ENCODE measurements at regions of chr10 and their contacts with region 1.

Region 1: DNA sequence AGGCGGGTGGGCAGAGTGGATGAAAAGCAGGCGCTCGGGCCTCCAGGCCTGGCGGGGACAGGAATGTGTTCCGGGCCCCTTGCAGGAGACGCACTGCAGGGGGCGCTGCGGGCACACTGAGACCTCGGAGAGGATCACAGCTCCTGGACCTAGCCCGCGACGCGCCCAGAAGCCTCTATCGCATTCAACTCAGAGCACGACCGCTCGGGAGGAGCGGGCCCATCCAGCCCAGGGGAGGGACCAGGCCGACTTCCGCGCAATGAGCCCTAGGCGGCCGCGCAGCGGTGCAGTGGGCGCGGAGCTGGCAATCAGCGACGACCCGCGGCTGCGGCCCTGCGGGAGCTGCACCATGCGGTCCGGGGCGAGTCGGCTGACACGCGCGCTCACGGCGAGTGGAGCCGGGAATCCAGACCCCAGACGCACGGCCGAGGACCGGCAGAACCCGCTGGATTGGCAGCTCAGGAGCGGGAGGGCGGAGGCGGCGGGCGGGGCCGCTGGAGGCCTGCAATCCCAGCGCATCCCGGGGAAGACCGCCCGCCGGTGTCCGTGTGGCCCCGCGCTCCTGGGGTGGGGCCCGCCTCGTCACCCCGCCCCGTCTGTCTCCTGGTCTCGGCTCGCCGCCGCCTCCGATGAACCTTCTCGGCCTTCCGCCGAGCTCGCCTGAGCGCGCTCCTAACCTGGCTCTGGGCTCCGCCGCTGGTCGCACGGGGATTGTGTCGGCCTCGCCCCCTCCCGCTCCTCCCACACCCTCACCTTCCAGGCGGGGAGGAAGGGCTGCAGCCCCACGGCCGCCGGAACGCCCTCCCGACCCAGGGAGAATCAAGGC is 33.5 kb upstream of the GRID1 start:
- DNase-seq: peak; percentile 93 to 96
- H3K4me3 ChIP-seq: peak overlapping the region; percentile 64 to 68
- H3K27ac ChIP-seq: peak overlapping the region; percentile 73 to 85
- H3K4me1 ChIP-seq: peaks cover 0 to 37% (median 30%) of the 10 kb centered on the region in 4 donors
- H3K27me3 ChIP-seq: no peaks in the 10 kb centered on the region
- CTCF ChIP-seq: peak; percentile 93 to 96

Region 2: DNA sequence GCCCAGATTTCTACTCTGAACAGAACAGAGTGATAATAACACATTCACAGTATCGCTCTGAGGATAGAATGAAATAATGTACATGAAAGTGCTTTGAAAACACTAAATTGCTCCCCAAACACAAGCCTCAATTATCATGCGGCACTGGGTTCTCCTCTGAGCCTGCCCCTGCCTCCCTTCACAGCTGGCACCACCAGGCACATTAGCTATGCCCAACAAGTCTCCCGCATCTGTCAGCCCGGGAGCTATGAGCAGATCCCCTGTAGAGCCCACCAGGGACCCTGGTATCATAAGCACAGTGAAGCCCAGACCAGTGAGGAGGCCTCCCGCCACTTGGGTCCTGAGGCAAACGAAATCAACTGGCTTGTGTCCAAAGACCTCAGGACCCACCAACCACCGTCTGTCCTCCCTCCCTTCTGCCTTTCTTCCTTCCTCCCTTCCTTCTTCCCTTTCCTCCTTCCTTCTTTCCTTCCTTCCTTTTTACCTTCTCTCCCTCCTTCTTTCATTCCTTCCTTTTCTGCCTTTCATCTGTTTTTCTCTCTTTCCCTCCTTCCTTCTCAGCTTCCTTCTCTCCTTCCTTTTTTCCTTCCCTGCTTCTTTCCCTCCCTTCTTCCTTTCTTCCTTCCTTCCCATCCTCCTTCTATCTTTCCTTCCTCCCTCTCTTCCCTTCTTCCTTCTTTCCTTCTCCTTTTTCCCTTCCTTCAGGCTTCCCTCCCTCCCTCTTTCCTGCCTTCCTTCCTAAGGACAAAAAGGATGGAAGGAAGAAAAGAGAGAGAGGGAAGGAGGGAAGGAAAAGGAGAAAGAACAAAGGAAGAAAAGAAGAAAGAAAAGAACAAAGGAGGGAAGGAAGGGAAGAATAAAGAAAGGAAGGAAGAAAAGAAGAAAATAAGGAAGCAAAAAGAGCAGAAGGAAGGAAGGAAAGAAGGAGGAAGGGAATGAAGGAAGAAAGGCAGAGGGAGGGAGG is 438.7 kb before region 1 on chr10:
- intact Hi-C with region 1: no loop called
- DNase-seq: no peak
- H3K4me3 ChIP-seq: no peak overlapping the region
- H3K27ac ChIP-seq: no peak overlapping the region
- H3K4me1 ChIP-seq: no peaks in the 10 kb centered on the region
- H3K27me3 ChIP-seq: no peaks in the 10 kb centered on the region
- CTCF ChIP-seq: no peak

Region 3: DNA sequence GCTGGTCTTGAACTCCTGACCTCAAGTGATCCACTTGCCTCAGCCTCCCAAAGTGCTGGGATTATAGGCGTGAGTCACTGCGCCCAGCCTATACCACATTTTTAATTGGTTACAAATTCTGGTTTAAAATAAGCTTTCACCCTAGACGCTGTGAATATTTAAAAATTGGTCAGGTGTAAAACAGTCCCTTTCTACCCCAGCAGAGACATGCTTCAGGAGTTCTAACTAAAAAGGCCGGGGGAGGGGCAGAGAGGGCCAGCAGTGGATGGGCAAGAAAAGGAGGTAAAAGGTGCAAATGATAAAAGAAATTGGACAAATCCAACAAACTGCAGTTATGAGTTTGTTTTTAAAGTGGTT is 51.5 kb after region 1 on chr10:
- intact Hi-C with region 1: no loop called
- DNase-seq: no peak
- H3K4me3 ChIP-seq: no peak overlapping the region
- H3K27ac ChIP-seq: no peak overlapping the region
- H3K4me1 ChIP-seq: peaks cover 0 to 7% (median under 1%) of the 10 kb centered on the region in 4 donors
- H3K27me3 ChIP-seq: no peaks in the 10 kb centered on the region
- CTCF ChIP-seq: no peak

Region 4: DNA sequence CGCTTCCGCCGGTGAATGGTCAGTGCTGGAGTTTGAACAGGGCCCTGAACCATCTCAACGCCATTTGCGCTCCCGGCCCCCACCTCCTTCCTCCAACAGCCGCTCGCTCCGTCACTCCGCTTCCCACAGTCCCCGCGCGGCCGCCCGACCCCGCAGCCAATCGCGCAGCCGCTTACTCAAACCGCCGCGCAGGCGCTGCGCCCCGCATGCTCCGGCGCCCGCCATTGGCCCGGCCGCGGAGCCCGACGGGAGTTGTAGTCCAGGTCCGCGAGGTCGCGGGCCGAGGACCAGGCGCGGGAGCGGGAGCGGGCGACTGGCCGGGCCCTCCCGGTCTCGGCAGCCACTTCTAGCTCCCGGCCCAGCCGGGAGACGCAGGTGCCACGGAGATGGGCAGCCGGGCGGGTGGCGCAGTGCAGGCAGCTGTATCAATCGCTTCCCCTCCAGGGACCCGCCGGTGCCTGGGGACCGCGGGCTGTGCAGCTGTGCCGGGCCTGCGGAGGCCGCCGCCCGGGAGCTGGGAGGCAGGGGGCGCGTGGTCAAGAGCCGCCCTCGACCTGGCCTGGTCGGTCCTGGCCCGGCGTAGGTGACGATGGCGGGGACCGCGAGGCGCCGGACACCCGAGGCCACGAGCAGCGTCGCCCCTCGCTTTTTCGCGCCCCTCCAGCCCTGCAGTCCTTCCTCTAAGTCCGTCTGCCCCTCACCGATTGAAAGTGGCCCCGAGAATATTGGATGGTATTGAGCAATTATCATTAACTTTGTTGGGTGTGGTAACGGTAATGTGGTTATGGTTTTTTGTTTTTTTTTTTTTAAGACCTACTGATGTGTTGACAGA is 121.8 kb after region 1 on chr10 and contains the start of gene WAPL:
- intact Hi-C with region 1: loop called (anchors 2 kb)
- DNase-seq: peak; percentile 96 to 98
- H3K4me3 ChIP-seq: peak within 1 kb of the TSS; percentile 75 to 97
- H3K27ac ChIP-seq: peak within 1 kb of the TSS; percentile 95 to 98
- H3K4me1 ChIP-seq: peaks cover 0 to 50% (median 32%) of the 10 kb centered on the region in 4 donors
- H3K27me3 ChIP-seq: no peaks in the 10 kb centered on the region
- CTCF ChIP-seq: no peak

Region 5: GRCh38 chr10:86585037-86585725 is 185.1 kb after region 1 on chr10:
- intact Hi-C with region 1: loop called (anchors 5 kb)
- DNase-seq: peak; percentile 42 to 83
- H3K4me3 ChIP-seq: no peak overlapping the region
- H3K27ac ChIP-seq: no peak overlapping the region
- H3K4me1 ChIP-seq: peaks cover 0 to 12% (median 4%) of the 10 kb centered on the region in 4 donors
- H3K27me3 ChIP-seq: no peaks in the 10 kb centered on the region
- CTCF ChIP-seq: peak; percentile 91 to 93

Region 6: DNA sequence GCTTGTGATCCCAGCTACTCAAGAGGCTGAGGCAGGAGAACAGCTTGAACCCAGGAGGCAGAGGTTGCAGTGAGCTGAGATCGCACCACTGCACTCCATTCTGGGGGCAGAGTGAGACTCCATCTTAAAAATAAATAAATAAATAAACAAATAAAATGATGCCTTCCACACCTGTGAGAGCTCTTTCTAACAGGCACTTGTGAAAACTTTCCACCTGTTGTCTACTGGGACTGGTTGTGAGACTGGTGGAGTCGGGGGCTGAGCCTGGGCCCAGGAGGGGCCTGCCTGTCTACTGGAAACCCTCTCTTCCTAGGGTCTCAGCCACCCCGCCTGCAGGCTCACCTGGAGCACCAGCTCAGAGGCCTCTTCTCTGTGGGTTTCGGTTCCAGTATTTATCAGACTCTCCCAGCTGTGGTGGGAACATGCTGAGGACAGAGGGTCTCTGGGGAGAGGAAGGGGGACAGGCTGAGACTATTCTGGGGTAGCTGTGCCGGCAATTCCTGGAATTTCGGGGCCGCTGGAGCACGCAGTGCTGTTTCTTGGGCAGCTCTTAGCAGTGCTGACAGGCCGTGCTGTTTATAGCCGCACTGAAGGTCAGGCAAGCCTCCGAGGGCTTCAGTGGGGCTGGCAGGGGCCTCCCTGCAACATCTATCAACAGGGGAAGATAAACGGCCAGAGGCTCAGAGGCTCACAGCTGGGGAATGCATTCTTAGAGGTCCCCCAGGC is 272.1 kb after region 1 on chr10:
- intact Hi-C with region 1: no loop called
- DNase-seq: peak; percentile 39 to 88
- H3K4me3 ChIP-seq: peak overlapping the region; percentile 51 to 61
- H3K27ac ChIP-seq: peak overlapping the region; percentile 81 to 89
- H3K4me1 ChIP-seq: peaks cover 0 to 93% (median 81%) of the 10 kb centered on the region in 4 donors
- H3K27me3 ChIP-seq: no peaks in the 10 kb centered on the region
- CTCF ChIP-seq: no peak